Colonic mucosa (tissue), 4 donors: ENCODE measurements at regions of chr17 and their contacts with region 1.

Region 1: DNA sequence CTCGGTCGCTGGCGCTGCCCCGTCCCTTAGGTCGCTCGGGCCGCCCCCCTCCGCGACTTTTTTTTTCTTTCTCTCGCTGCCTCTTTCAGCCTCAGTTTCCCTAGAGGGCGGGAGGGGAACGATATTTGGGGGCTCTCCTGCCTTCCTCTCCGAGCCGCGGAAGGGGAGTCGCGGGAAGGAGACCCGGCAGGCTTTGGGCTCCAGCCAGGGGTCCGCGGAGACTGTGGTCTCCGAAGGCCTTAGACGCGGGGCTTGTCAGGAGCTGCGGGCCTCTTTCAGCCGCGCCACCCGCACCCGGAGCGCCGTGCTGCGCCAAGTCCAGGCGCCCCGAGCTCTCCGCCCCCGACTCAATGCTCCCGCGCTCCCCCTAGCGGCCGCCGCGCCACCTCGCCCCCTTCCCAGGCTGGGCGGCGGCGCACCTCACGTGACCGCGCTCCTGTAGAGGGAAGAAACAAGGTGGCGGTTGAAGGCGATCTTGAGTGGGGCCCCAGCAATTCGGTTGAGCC is at the start of gene LRRC37B:
- DNase-seq: peak; percentile 94
- H3K4me3 ChIP-seq: peak within 1 kb of the TSS; percentile 65
- H3K27ac ChIP-seq: peak within 1 kb of the TSS; percentile 69
- H3K4me1 ChIP-seq: no peaks in the 10 kb centered on the region
- H3K27me3 ChIP-seq: no peaks in the 10 kb centered on the region
- CTCF ChIP-seq: peak; percentile 88
- total RNA-seq, gene LRRC37B: 9.3 to 9.7 TPM

Region 2: DNA sequence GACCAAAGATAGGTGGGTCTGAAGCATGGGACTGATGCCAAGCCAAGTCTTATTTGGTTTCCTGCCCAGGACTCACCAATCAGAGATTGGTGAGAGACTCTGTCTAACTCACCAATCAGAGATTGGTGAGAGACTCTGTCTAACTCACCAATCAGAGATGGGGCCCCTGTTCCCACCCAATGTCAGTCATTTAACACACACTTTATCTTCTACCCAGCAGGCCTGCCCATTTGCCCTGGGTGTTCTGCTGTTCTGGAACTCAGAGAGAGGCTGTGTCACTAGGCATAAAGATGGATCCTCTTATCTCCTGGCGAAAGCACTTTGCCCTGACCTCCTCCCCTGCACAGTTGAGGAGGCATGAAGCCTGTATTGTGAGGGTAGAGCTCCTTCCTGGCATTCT is 129.8 kb after region 1 on chr17:
- intact Hi-C with region 1: loop called (anchors 5 kb)
- DNase-seq: no peak
- H3K4me3 ChIP-seq: no peak overlapping the region
- H3K27ac ChIP-seq: no peak overlapping the region
- H3K4me1 ChIP-seq: no peaks in the 10 kb centered on the region
- H3K27me3 ChIP-seq: no peaks in the 10 kb centered on the region
- CTCF ChIP-seq: no peak